Caco-2 (cell line): ENCODE measurements at regions of chrX and their contacts with region 1.

Region 1: GRCh38 chrX:103446665-103447302 is 70.4 kb downstream of the BEX3 start:
- DNase-seq: peak; percentile 49 to 61
- H3K4me3 ChIP-seq: no peak overlapping the region
- H3K4me3 Mint-ChIP-seq: no peak overlapping the region
- H3K27ac Mint-ChIP-seq: peak overlapping the region; percentile 64
- H3K4me1 ChIP-seq: peaks cover 25% of the 10 kb centered on the region
- H3K4me1 Mint-ChIP-seq: no peaks in the 10 kb centered on the region
- H3K27me3 ChIP-seq: no peaks in the 10 kb centered on the region
- H3K27me3 Mint-ChIP-seq: no peaks in the 10 kb centered on the region
- CTCF ChIP-seq: no peak

Region 2: GRCh38 chrX:103343105-103343504 is 103.7 kb before region 1 on chrX:
- CTCF ChIA-PET with region 1: no interaction called
- POLR2A ChIA-PET with region 1: no interaction called
- intact Hi-C with region 1: loop called (anchors 5 kb)
- DNase-seq: peak; percentile 37
- H3K4me3 ChIP-seq: no peak overlapping the region
- H3K4me3 Mint-ChIP-seq: no peak overlapping the region
- H3K27ac Mint-ChIP-seq: no peak overlapping the region
- H3K4me1 ChIP-seq: no peaks in the 10 kb centered on the region
- H3K4me1 Mint-ChIP-seq: peaks cover 6% of the 10 kb centered on the region
- H3K27me3 ChIP-seq: no peaks in the 10 kb centered on the region
- H3K27me3 Mint-ChIP-seq: no peaks in the 10 kb centered on the region
- CTCF ChIP-seq: peak; percentile 37 to 67

Region 3: GRCh38 chrX:103362504-103362903 is 84.3 kb before region 1 on chrX:
- CTCF ChIA-PET with region 1: no interaction called
- POLR2A ChIA-PET with region 1: no interaction called
- intact Hi-C with region 1: loop called (anchors 5 kb)
- DNase-seq: peak; percentile 37 to 40
- H3K4me3 ChIP-seq: no peak overlapping the region
- H3K4me3 Mint-ChIP-seq: peak overlapping the region; percentile 42
- H3K27ac Mint-ChIP-seq: peak overlapping the region; percentile 78
- H3K4me1 ChIP-seq: peaks cover 39% of the 10 kb centered on the region
- H3K4me1 Mint-ChIP-seq: peaks cover 34% of the 10 kb centered on the region
- H3K27me3 ChIP-seq: no peaks in the 10 kb centered on the region
- H3K27me3 Mint-ChIP-seq: no peaks in the 10 kb centered on the region
- CTCF ChIP-seq: no peak